Sigmoid colon (tissue), 7 donors: ENCODE measurements at regions of chr20 and their contacts with region 1.

Region 1: GRCh38 chr20:44609511-44610312 is 27.3 kb downstream of the PKIG start:
- DNase-seq: peak; percentile 94
- H3K4me3 ChIP-seq: peak overlapping the region; percentile 9 to 38 (median 25)
- H3K27ac ChIP-seq: peak overlapping the region; percentile 83 to 95 (median 90)
- H3K4me1 ChIP-seq: peaks cover 0 to 47% (median 42%) of the 10 kb centered on the region in 4 donors
- H3K27me3 ChIP-seq: no peaks in the 10 kb centered on the region
- CTCF ChIP-seq: peak; percentile 97 to 98 (median 98)
- EP300 ChIP-seq: no peak
- POLR2A ChIP-seq: no peak

Region 2: GRCh38 chr20:43379578-43379917 is 1230.2 kb before region 1 on chr20:
- intact Hi-C with region 1: no loop called
- DNase-seq: no peak
- H3K4me3 ChIP-seq: no peak overlapping the region
- H3K27ac ChIP-seq: no peak overlapping the region
- H3K4me1 ChIP-seq: no peaks in the 10 kb centered on the region
- H3K27me3 ChIP-seq: no peaks in the 10 kb centered on the region
- CTCF ChIP-seq: no peak
- EP300 ChIP-seq: no peak
- POLR2A ChIP-seq: no peak

Region 3: DNA sequence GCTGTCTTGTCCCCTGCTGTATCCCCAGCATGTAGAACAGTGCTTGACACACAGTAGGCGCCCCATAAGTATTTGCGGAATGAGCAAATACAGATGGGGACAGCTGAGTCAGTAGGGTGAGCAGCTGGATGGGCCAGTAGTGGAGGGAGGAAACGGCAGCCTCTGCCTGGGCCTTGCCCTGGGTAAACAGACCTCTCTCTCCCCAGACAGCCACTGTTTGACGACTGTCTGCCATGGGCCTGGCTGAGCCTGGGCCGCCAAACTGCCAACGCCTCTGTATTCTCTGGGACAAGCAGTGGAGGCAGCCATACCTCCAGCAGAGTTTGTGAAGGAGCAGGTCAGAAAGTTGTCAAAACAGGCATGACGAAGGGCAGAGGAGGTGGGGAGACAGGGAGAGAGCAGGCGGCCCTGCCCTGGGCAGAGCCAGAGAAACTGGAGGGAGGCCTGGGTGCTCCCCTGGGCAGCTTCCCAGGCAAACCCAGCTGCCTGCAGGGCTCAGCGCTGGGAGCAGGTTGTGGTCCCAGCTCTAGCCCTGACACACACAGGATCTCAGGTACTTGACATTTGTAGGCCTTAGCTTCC is 239.0 kb before region 1 on chr20:
- intact Hi-C with region 1: no loop called
- DNase-seq: no peak
- H3K4me3 ChIP-seq: no peak overlapping the region
- H3K27ac ChIP-seq: no peak overlapping the region
- H3K4me1 ChIP-seq: no peaks in the 10 kb centered on the region
- H3K27me3 ChIP-seq: no peaks in the 10 kb centered on the region
- CTCF ChIP-seq: no peak
- EP300 ChIP-seq: no peak
- POLR2A ChIP-seq: no peak

Region 4: GRCh38 chr20:44467289-44467883 is 142.3 kb before region 1 on chr20:
- intact Hi-C with region 1: no loop called
- DNase-seq: peak; percentile 75
- H3K4me3 ChIP-seq: no peak overlapping the region
- H3K27ac ChIP-seq: no peak overlapping the region
- H3K4me1 ChIP-seq: no peaks in the 10 kb centered on the region
- H3K27me3 ChIP-seq: peaks cover 0 to 3% (median 0%) of the 10 kb centered on the region in 3 donors
- CTCF ChIP-seq: no peak
- EP300 ChIP-seq: peak in 1 of 4 donors; percentile 60
- POLR2A ChIP-seq: no peak

Region 5: GRCh38 chr20:44532259-44532980 is 77.3 kb before region 1 on chr20:
- intact Hi-C with region 1: loop called (anchors 1 kb)
- DNase-seq: no peak
- H3K4me3 ChIP-seq: peak overlapping the region; percentile 56 to 97 (median 78)
- H3K27ac ChIP-seq: peak overlapping the region; percentile 76 to 92 (median 84)
- H3K4me1 ChIP-seq: peaks cover 0 to 49% (median 35%) of the 10 kb centered on the region in 4 donors
- H3K27me3 ChIP-seq: no peaks in the 10 kb centered on the region
- CTCF ChIP-seq: no peak
- EP300 ChIP-seq: no peak
- POLR2A ChIP-seq: no peak

Region 6: GRCh38 chr20:44572541-44573500 is 36.9 kb before region 1 on chr20:
- intact Hi-C with region 1: loop called (anchors 5 kb)
- DNase-seq: peak; percentile 86
- H3K4me3 ChIP-seq: peak overlapping the region in 1 of 4 donors; percentile 13
- H3K27ac ChIP-seq: peak overlapping the region; percentile 81 to 95 (median 92)
- H3K4me1 ChIP-seq: peaks cover 0 to 80% (median 79%) of the 10 kb centered on the region in 4 donors
- H3K27me3 ChIP-seq: no peaks in the 10 kb centered on the region
- CTCF ChIP-seq: no peak
- EP300 ChIP-seq: peak in 2 of 4 donors; percentile 23 to 64
- POLR2A ChIP-seq: no peak

Region 7: GRCh38 chr20:44651684-44652423 is 42.1 kb after region 1 on chr20 and contains the start of gene ADA:
- intact Hi-C with region 1: loop called (anchors 5 kb)
- DNase-seq: peak; percentile 81
- H3K4me3 ChIP-seq: peak within 1 kb of the TSS; percentile 76 to 92 (median 78)
- H3K27ac ChIP-seq: peak within 1 kb of the TSS; percentile 81 to 91 (median 88)
- H3K4me1 ChIP-seq: peaks cover 2 to 24% (median 16%) of the 10 kb centered on the region in 4 donors
- H3K27me3 ChIP-seq: no peaks in the 10 kb centered on the region
- CTCF ChIP-seq: no peak
- EP300 ChIP-seq: no peak
- POLR2A ChIP-seq: no peak
- total RNA-seq, gene ADA: 4.3 to 17.1 (median 11.7) TPM